ENCODE measurements at regions of chr12 and their contacts with region 1.

Region 1: DNA sequence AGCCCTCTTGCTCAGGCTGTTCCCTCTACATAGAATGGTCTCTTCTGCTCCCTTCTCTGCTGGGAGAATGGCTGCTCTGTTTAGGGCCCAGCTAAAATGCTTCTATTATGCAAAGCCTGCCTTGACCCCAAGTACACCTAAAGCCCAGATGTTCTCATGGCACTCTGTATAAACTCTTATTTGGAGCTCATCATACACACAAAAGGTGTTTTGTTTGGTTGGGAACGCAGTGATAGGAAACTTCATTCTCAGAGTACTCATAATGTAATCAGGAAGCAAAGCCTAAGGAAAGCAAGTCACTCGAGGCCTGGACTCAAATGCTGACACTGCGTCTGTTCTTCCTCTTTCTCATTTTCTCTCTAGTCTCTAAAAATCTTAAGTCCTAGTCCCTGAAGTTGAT is 38.2 kb upstream of the SYCP3 start:
- DNase-seq: no peak
- H3K4me3 ChIP-seq: no peak overlapping the region
- H3K27ac ChIP-seq: no peak overlapping the region
- H3K4me1 ChIP-seq: no peaks in the 10 kb centered on the region
- H3K27me3 ChIP-seq: no peaks in the 10 kb centered on the region
- CTCF ChIP-seq: no peak

Region 2: DNA sequence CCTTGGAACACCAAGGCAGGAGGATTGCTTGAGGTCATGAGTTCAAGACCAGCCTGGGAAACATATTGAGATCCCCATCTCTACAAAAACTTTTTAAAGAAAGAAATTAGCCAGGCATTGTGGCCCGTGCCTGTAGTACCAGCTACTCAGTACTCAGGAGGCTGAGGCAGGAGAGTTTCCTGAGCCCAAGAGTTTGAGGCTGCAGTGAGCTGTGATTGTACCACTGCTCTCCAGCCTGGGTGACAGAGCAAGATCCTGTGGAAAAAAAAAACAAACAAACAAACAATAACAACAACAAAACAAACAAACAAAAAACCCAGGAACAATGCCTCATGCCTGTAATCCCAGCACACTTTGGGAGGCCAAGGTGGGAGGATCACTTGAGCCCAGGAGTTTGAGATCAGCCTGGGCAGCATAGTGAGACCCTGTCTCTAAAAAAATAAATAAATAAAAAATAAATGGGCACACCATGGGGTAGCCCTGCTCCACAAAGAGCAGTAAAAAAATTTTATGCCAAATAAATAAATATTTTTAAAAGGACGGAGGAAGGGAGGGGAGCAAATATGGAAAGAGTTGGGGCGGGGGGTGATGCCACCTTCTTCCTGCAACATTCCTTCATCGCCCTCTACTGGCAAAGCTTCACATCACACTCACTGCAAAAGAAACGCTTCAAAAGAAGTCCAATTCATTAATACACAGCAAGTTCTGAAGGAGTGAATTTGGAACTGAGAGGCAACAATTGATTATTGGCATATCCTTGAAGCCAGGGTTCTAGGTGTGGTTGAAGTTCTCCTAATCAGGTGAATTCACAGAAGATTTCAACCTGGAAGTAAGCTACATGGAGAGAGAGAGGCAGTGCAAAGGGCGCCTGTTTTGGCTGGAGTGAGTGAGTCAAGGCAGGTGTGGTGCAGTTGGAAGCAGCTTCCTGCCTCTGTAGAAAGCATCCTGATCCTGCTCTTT is 62.1 kb after region 1 on chr12:
- intact Hi-C with region 1: loop called (anchors 2 kb)
- DNase-seq: peak; percentile 69 to 74
- H3K4me3 ChIP-seq: no peak overlapping the region
- H3K27ac ChIP-seq: no peak overlapping the region
- H3K4me1 ChIP-seq: peaks cover 0 to 4% (median 0%) of the 10 kb centered on the region in 4 donors
- H3K27me3 ChIP-seq: no peaks in the 10 kb centered on the region
- CTCF ChIP-seq: peak; percentile 74 to 90